ENCODE measurements at regions of chr7 and their contacts with region 1.

Region 1: DNA sequence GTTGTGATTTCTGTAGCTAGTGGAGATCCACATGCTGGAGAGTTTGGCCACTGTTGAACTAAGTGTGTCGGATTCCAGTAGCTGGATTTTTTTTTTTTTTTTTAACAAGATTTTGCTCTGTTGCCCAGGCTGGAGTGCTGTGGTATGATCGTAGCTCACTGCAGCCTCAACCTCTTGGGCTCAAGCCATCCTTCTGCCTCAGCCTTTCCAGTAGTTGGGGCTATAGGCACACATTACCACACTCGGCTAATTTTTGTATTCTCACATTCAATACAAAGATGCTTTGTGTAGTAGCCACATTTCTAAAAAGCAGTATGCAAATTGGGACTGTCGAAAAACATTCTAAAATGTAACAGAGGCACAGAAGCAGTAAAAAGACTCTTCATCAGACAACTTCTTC is 63.5 kb downstream of the RABGEF1 start:
- DNase-seq: no peak
- H3K4me3 ChIP-seq: no peak overlapping the region
- H3K27ac ChIP-seq: no peak overlapping the region
- H3K4me1 ChIP-seq: no peaks in the 10 kb centered on the region
- H3K27me3 ChIP-seq: no peaks in the 10 kb centered on the region
- CTCF ChIP-seq: no peak
- POLR2A ChIP-seq: no peak

Region 2: GRCh38 chr7:66740302-66740979 is 63.6 kb before region 1 on chr7 and contains the start of gene RABGEF1:
- intact Hi-C with region 1: loop called (anchors 10 kb)
- DNase-seq: peak; percentile 97
- H3K4me3 ChIP-seq: peak within 1 kb of the TSS; percentile 59 to 82
- H3K27ac ChIP-seq: peak within 1 kb of the TSS; percentile 92 to 93
- H3K4me1 ChIP-seq: no peaks in the 10 kb centered on the region
- H3K27me3 ChIP-seq: no peaks in the 10 kb centered on the region
- CTCF ChIP-seq: peak in 1 of 4 experiments; percentile 6
- POLR2A ChIP-seq: peak in 1 of 2 donors; percentile 86
- total RNA-seq, gene RABGEF1: 13.1 to 38.3 (median 25.4) TPM

Region 3: GRCh38 chr7:67056683-67057082 is 252.7 kb after region 1 on chr7:
- intact Hi-C with region 1: no loop called
- DNase-seq: no peak
- H3K4me3 ChIP-seq: no peak overlapping the region
- H3K27ac ChIP-seq: no peak overlapping the region
- H3K4me1 ChIP-seq: no peaks in the 10 kb centered on the region
- H3K27me3 ChIP-seq: no peaks in the 10 kb centered on the region
- CTCF ChIP-seq: no peak
- POLR2A ChIP-seq: no peak

Measured in uterus (tissue), 4 donors.